ENCODE measurements at regions of chr11 and their contacts with region 1.

Region 1: GRCh38 chr11:13210424-13210823 is 67.2 kb upstream of the BMAL1 start:
- DNase-seq: peak; percentile 63
- H3K4me3 ChIP-seq: no peak overlapping the region
- H3K27ac ChIP-seq: no peak overlapping the region
- H3K27me3 ChIP-seq: no peaks in the 10 kb centered on the region
- CTCF ChIP-seq: peak; percentile 74

Region 2: DNA sequence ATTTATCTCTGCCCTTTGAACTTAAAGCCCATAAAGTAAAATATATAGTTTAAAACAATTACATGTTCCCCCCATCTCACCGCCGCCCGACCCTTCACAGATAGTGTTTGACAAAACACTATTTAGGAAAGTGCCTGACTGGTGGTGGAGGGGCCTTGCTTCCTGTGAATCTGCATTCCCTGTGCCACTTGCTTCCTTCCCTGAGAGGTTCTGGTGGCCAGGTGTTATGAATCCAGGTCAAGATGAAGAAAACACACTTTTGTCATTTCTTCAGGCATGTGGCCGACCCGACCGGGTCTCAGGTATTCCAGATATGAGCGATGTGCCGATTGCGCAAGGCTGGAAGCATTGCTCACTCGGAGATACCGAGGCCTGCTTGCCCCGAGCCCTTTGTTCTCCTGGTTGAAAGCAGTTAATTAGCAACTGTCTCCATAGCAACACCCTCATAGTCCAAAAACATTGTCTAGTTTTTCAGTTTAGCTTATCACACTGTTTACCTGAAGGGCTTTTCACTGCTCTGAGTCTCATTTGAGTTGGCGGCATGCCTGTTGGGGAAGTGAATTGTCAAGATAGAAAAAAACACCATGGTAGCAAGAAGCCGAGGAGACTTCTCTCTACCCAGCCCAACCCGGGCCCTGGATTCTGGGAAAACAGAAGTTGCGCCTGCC is 407.9 kb before region 1 on chr11:
- CTCF ChIA-PET with region 1: no interaction called
- POLR2A ChIA-PET with region 1: no interaction called
- DNase-seq: no peak
- H3K4me3 ChIP-seq: no peak overlapping the region
- H3K27ac ChIP-seq: peak overlapping the region; percentile 82
- H3K27me3 ChIP-seq: no peaks in the 10 kb centered on the region
- CTCF ChIP-seq: no peak

Region 3: GRCh38 chr11:13126430-13126829 is 84.0 kb before region 1 on chr11:
- CTCF ChIA-PET with region 1: no interaction called
- POLR2A ChIA-PET with region 1: no interaction called
- DNase-seq: peak; percentile 87
- H3K4me3 ChIP-seq: no peak overlapping the region
- H3K27ac ChIP-seq: peak overlapping the region; percentile 55
- H3K27me3 ChIP-seq: no peaks in the 10 kb centered on the region
- CTCF ChIP-seq: no peak

Region 4: DNA sequence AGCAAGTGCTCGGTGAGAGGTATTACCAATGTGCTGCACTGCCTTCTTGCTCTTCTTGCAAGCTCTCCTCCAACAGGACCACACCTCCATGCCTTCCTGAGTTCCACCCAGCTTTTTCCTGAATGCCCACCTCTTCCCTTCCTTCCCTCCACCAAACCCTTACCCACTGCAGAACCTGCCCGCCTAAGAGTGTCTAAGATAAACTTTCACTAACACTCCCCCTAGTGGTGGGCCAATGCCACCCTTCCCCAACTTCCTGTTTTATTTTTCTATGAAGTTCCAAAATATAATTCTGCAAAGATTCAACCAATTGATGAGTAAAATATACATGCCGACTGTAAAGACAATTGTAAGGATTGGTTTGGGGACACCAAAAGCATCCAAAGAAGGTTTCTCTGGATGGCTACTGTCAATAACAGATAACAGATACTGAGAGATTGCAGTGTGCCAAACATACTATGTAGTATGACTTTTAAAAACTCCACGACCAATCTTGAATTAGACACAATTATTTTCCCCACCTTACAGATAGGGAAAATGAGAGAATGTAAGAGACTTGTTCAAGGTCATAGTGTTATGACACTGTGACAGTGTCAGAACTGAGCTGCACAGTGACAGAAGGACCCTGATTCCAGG is 28.6 kb after region 1 on chr11:
- CTCF ChIA-PET with region 1: interaction called, 24 read pairs
- POLR2A ChIA-PET with region 1: no interaction called
- DNase-seq: no peak
- H3K4me3 ChIP-seq: no peak overlapping the region
- H3K27ac ChIP-seq: no peak overlapping the region
- H3K27me3 ChIP-seq: no peaks in the 10 kb centered on the region
- CTCF ChIP-seq: peak; percentile 81

Region 5: GRCh38 chr11:13335319-13335718 is 124.9 kb after region 1 on chr11:
- CTCF ChIA-PET with region 1: interaction called, 106 read pairs
- POLR2A ChIA-PET with region 1: interaction called, 4 read pairs
- DNase-seq: no peak
- H3K4me3 ChIP-seq: no peak overlapping the region
- H3K27ac ChIP-seq: no peak overlapping the region
- H3K27me3 ChIP-seq: no peaks in the 10 kb centered on the region
- CTCF ChIP-seq: peak; percentile 86

Region 6: DNA sequence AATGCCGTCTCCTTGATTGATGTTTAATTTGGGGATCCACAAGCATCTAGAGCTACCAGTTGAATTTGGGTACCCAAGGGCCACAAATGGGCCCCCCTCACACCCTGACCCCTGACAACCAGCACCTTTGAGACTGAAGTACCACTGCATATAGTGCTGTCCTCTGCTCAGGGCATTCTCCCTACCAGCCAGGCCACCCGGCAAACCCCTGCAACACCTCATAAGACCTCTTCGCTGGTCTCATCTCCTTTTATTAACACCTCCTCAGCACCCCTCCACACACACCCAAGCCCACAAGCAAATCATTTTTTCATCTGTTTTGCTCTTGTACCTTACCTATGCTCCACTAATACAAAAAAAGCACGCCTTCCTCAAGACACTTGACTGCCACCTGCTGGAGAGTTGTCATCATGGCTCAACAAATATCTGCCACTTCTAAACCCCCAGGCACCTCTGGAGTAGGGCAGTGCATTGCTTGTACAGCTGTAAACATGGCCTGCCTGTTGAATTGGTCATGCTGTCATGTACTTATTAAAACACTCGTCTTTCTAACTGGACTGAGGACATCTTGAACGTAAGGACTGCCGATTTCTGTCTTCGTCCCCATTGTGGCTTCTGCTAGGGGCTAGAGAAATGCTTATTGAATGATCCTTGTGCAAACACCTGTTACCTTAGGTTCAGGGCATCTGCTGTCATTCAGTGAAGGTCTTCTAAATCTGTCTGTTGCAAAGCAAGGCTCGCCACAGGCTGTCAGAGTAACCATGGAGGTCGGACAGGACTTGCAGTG is 133.7 kb after region 1 on chr11:
- CTCF ChIA-PET with region 1: interaction called, 148 read pairs
- POLR2A ChIA-PET with region 1: interaction called, 3 read pairs
- DNase-seq: peak; percentile 47
- H3K4me3 ChIP-seq: no peak overlapping the region
- H3K27ac ChIP-seq: no peak overlapping the region
- H3K27me3 ChIP-seq: no peaks in the 10 kb centered on the region
- CTCF ChIP-seq: peak; percentile 88

Region 7: GRCh38 chr11:13384908-13385640 is 174.7 kb after region 1 on chr11:
- CTCF ChIA-PET with region 1: interaction called, 121 read pairs
- POLR2A ChIA-PET with region 1: no interaction called
- DNase-seq: peak; percentile 41
- H3K4me3 ChIP-seq: no peak overlapping the region
- H3K27ac ChIP-seq: no peak overlapping the region
- H3K27me3 ChIP-seq: no peaks in the 10 kb centered on the region
- CTCF ChIP-seq: peak; percentile 78

Region 8: GRCh38 chr11:13391217-13391616 is 180.8 kb after region 1 on chr11:
- CTCF ChIA-PET with region 1: interaction called, 121 read pairs
- POLR2A ChIA-PET with region 1: no interaction called
- DNase-seq: no peak
- H3K4me3 ChIP-seq: no peak overlapping the region
- H3K27ac ChIP-seq: no peak overlapping the region
- H3K27me3 ChIP-seq: no peaks in the 10 kb centered on the region
- CTCF ChIP-seq: no peak

Region 9: DNA sequence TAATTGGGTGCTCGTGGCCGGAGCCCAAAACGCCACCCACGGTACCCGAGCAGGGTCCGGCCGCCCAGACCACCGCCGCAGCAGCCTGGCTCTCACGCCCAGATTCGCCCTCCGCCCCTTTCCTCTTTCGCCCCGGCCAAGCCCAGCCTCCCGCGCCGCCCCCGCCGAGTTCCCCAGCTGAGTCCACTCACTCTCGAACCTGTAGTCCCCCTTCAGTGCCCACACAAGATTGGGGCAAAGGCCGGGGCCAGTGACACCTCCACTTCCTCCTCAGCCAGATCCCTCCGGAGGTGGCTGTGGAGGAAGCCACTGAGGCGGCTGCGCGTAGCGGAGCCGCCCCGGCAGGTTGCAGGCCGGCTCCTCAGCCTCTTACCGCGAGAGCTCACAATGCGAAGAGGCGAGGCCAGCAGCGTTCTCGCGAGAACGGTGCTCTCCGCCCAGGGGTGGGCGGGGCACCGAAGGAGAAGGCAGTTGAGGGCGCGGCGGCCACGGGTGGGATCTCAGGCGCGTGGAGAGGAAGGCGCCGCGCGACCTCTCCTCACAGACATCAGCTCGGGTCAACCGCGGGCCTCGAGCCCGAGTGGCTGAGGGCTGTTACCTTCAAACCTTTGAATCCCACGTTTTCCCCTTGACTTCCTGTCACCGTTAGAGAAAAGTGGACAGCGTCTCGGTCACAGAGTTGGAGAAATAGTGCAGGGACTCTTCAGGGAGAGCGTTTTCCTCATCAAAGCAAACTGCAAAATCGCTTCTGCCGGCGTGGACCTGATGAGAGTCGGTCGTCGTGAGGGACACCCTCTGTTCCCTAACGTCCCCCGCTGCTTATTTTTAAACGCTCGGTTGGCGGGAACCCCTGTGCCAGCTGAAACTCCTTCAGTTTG is 252.7 kb after region 1 on chr11 and contains the start of gene BTBD10:
- CTCF ChIA-PET with region 1: interaction called, 17 read pairs
- POLR2A ChIA-PET with region 1: no interaction called
- DNase-seq: peak; percentile 88
- H3K4me3 ChIP-seq: peak within 1 kb of the TSS; percentile 86
- H3K27ac ChIP-seq: peak within 1 kb of the TSS; percentile 72
- H3K27me3 ChIP-seq: peaks cover 6% of the 10 kb centered on the region
- CTCF ChIP-seq: no peak
- polyA plus RNA-seq, gene BTBD10: 50.2 and 60.8 TPM in 2 replicates

Measured in AG04450 (cell line).